Ovary (tissue), 10 donors: ENCODE measurements at regions of chr9 and their contacts with region 1.

Region 1: DNA sequence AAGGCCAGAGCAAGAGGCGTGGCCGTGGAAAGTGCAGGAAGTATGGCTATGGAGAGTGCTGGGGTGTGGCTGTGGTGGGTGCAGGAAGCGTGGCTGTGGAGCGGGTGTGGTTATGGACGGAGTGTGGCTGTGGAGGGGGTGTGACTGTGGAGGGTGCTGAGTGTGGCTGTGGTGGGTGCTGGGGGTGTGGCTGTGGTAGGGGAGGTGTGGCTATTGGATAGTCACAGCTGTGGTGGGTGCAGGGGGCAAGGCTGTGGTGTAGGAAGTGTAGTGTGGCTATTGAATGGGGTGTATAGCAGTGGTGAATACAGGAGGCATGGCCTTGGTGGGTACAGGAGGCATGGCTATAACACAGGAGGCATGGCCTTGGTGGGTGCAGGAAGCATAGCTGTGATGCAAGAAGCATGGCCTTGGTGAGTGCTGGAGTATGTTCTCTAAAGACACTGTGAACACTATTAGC is 40.8 kb upstream of the SPATA31C2 start:
- DNase-seq: no peak
- H3K4me3 ChIP-seq: no peak overlapping the region
- H3K27ac ChIP-seq: no peak overlapping the region
- H3K4me1 ChIP-seq: peaks cover 4% of the 10 kb centered on the region
- H3K27me3 ChIP-seq: no peaks in the 10 kb centered on the region
- CTCF ChIP-seq: no peak
- EP300 ChIP-seq: no peak
- POLR2A ChIP-seq: no peak

Region 2: DNA sequence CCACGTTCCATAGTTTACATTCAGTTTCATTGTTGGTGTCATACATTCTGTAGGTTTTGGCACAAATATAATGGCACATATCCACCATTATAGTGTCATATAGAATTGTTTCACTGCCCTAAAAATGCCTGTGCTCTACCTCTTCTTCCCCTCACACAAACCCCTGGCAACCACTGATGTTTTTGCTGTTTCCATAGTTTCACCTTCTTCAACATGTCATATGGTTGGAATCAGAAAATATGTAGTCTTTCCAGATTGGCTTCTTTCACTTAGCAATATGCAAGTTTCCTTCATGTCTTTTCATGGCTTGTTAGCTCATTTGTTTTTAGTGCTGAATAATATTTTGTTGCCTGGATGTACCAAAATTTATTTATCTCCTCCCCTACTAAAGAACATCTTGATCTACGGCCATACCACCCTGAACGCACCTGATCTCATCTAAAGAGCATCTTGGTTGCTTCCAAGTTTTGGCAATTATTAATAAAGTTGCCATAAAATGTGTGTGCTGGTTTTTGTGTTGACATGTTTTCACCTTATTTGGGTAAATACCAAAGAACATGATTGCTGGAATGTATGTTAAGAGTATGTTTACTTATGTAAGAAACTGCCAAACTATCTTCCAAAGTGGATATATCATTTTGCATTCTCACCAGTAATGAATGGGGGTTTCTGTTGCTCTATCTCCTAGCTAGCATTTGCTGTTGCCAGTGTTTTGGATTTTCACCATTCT is 187.8 kb before region 1 on chr9:
- intact Hi-C with region 1: no loop called
- DNase-seq: no peak
- H3K4me3 ChIP-seq: no peak overlapping the region
- H3K27ac ChIP-seq: no peak overlapping the region
- H3K4me1 ChIP-seq: no peaks in the 10 kb centered on the region
- H3K27me3 ChIP-seq: no peaks in the 10 kb centered on the region
- CTCF ChIP-seq: no peak
- EP300 ChIP-seq: no peak
- POLR2A ChIP-seq: no peak

Region 3: GRCh38 chr9:88287972-88288371 is 108.9 kb after region 1 on chr9:
- intact Hi-C with region 1: loop called in 1 of 4 experiments (anchors 5 kb)
- DNase-seq: no peak
- H3K4me3 ChIP-seq: no peak overlapping the region
- H3K27ac ChIP-seq: no peak overlapping the region
- H3K4me1 ChIP-seq: no peaks in the 10 kb centered on the region
- H3K27me3 ChIP-seq: no peaks in the 10 kb centered on the region
- CTCF ChIP-seq: no peak
- EP300 ChIP-seq: no peak
- POLR2A ChIP-seq: no peak